Activated CD4-positive, alpha-beta T cell treated with anti-CD3 and anti-CD28 coated beads, Interleukin-2, amount 10 ng/mL, durations not matched to agents 7 days and 5 days (primary cell): ENCODE measurements at regions of chr17 and their contacts with region 1.

Region 1: DNA sequence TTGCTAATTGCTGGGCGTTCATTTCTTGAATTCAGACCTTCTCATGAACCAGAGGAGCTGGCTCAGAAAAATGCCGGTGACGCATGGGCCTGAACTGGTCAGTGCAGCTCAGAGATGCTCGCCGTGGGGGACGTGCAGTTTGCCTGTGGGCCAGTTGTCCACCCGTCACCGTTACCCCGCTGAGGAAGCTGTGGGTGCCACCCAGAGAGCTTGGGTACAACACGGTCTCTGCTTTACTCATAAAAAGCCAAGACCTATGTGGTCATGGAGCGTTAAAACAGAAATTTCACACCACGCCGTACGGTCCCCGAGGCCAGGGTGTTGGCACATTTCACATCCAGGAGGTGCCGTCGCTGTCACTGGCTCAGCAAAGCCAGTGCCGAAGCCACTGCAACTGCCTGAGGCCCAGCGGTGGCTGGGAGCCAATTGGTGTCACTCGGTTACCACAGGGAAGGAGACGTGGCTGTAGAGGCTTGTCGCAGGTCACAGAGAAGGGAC is 120.8 kb downstream of the METRNL start:
- DNase-seq: peak; percentile 43
- H3K4me3 Mint-ChIP-seq: peak overlapping the region; percentile 77
- H3K27ac Mint-ChIP-seq: peak overlapping the region; percentile 94
- H3K4me1 Mint-ChIP-seq: peaks cover 40% of the 10 kb centered on the region
- H3K27me3 Mint-ChIP-seq: no peaks in the 10 kb centered on the region

Region 2: GRCh38 chr17:82781894-82782274 is 418.4 kb before region 1 on chr17:
- CTCF ChIA-PET with region 1: interaction called, 14 read pairs
- POLR2A ChIA-PET with region 1: no interaction called
- DNase-seq: peak; percentile 89
- H3K4me3 Mint-ChIP-seq: no peak overlapping the region
- H3K27ac Mint-ChIP-seq: peak overlapping the region; percentile 28
- H3K4me1 Mint-ChIP-seq: peaks cover 16% of the 10 kb centered on the region
- H3K27me3 Mint-ChIP-seq: no peaks in the 10 kb centered on the region